ENCODE measurements at regions of chr4 and their contacts with region 1.

Region 1: GRCh38 chr4:15805583-15806517 is 27.7 kb downstream of the CD38 start:
- DNase-seq: peak; percentile 42 to 62 (median 50)
- ATAC-seq: peak; percentile 89
- H3K4me3 ChIP-seq: no peak overlapping the region
- H3K27ac ChIP-seq: no peak overlapping the region
- H3K4me1 ChIP-seq: no peaks in the 10 kb centered on the region
- H3K27me3 ChIP-seq: no peaks in the 10 kb centered on the region; a peak in 1 of 5 replicates
- CTCF ChIP-seq: peak; percentile 63 to 85 (median 74); a peak in 5 of 6 replicates
- EP300 ChIP-seq: no peak
- POLR2A ChIP-seq: no peak
- RAD21 ChIP-seq: peak; percentile 79 to 83

Region 2: GRCh38 chr4:15729910-15730533 is 75.8 kb before region 1 on chr4:
- CTCF ChIA-PET with region 1: no interaction called
- POLR2A ChIA-PET with region 1: no interaction called
- in situ Hi-C with region 1: no loop called
- intact Hi-C with region 1: loop called (anchors 2 kb)
- DNase-seq: peak; percentile 52 to 59 (median 56)
- ATAC-seq: peak; percentile 82
- H3K4me3 ChIP-seq: no peak overlapping the region
- H3K27ac ChIP-seq: no peak overlapping the region
- H3K4me1 ChIP-seq: no peaks in the 10 kb centered on the region
- H3K27me3 ChIP-seq: peaks cover 9 to 11% of the 10 kb centered on the region in 2 experiments; a peak in 4 of 5 replicates
- CTCF ChIP-seq: peak; percentile 53 to 80 (median 65)
- EP300 ChIP-seq: no peak
- POLR2A ChIP-seq: no peak
- RAD21 ChIP-seq: peak; percentile 51 to 65

Region 3: GRCh38 chr4:15868111-15868510 is 62.3 kb after region 1 on chr4:
- CTCF ChIA-PET with region 1: no interaction called
- POLR2A ChIA-PET with region 1: no interaction called
- in situ Hi-C with region 1: no loop called
- intact Hi-C with region 1: no loop called
- DNase-seq: peak in 1 of 4 experiments; percentile 18
- ATAC-seq: peak; percentile 80
- H3K4me3 ChIP-seq: no peak overlapping the region
- H3K27ac ChIP-seq: no peak overlapping the region
- H3K4me1 ChIP-seq: no peaks in the 10 kb centered on the region
- H3K27me3 ChIP-seq: no peaks in the 10 kb centered on the region
- CTCF ChIP-seq: peak in 2 of 3 experiments; percentile 10 to 30; a peak in 2 of 6 replicates
- EP300 ChIP-seq: no peak
- POLR2A ChIP-seq: no peak
- RAD21 ChIP-seq: no peak

Region 4: DNA sequence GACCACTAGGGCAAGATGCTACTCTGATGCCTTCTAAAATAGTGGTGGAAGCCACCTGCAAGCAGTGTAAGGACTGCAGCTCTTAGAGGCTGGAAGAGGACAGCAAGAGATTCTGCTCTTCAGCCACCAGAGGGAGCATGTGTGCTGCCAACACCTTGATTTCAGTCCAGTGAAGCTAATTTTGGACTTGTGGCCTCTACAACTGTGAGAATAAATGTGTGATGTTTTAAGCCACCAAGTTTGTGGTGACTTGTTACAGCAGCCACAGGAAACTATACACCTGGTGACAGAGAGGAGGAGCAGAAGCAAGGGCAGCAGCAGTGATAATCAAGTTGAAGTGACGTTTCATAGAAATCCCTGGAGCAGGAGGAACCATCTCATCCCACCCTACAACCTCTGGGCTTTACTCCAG is 76.8 kb after region 1 on chr4:
- CTCF ChIA-PET with region 1: interaction called, 4 read pairs
- POLR2A ChIA-PET with region 1: no interaction called
- in situ Hi-C with region 1: no loop called
- intact Hi-C with region 1: loop called (anchors 2 kb)
- DNase-seq: peak; percentile 44 to 70 (median 50)
- ATAC-seq: peak; percentile 96
- H3K4me3 ChIP-seq: no peak overlapping the region
- H3K27ac ChIP-seq: no peak overlapping the region
- H3K4me1 ChIP-seq: no peaks in the 10 kb centered on the region
- H3K27me3 ChIP-seq: no peaks in the 10 kb centered on the region; a peak in 1 of 5 replicates
- CTCF ChIP-seq: peak; percentile 76 to 78 (median 78)
- EP300 ChIP-seq: no peak
- POLR2A ChIP-seq: no peak
- RAD21 ChIP-seq: peak; percentile 49 to 67

Region 5: DNA sequence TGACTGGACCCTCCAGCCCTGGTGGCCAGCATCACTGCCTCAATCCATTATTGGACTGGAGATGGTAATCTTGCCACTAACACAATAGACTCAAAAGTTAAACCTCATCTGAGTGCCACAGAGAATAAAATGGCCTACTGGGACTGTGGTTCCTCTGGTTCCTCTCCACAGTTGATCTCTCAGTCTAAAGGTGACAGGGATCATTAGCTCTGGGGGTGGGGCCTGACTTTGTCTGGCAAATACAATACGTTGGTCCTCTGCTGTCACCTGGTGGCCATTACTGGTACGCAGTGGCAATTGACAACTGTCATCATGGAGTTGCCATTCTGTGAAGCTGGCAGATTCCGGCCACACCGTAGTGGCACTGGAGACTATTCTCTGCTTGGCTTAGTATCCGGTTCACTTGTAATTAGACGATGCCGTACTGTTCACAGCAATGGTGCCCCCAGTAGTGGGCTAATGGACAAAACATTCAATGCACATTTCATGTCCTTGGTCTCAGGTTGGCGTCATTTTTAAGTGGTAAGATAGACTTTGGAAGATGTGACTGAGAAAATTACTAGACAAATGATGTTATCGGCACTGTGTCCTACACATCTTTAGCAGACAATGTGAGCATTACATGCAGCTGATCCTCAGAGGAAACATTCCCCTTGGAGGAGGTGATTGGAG is 150.5 kb after region 1 on chr4:
- CTCF ChIA-PET with region 1: interaction called, 28 read pairs
- POLR2A ChIA-PET with region 1: no interaction called
- in situ Hi-C with region 1: loop called (anchors 5 kb)
- intact Hi-C with region 1: loop called (anchors 1 kb)
- DNase-seq: peak; percentile 73 to 77 (median 74)
- ATAC-seq: peak; percentile 97
- H3K4me3 ChIP-seq: no peak overlapping the region
- H3K27ac ChIP-seq: no peak overlapping the region
- H3K4me1 ChIP-seq: no peaks in the 10 kb centered on the region
- H3K27me3 ChIP-seq: no peaks in the 10 kb centered on the region; a peak in 1 of 5 replicates
- CTCF ChIP-seq: peak; percentile 80 to 90 (median 87)
- EP300 ChIP-seq: no peak
- POLR2A ChIP-seq: no peak
- RAD21 ChIP-seq: peak; percentile 77 to 84

Region 6: GRCh38 chr4:16001484-16001858 is 195.6 kb after region 1 on chr4:
- CTCF ChIA-PET with region 1: interaction called, 7 read pairs
- POLR2A ChIA-PET with region 1: no interaction called
- in situ Hi-C with region 1: loop called (anchors 10 kb)
- intact Hi-C with region 1: loop called (anchors 1 kb)
- DNase-seq: peak; percentile 62 to 68 (median 64)
- ATAC-seq: peak; percentile 99
- H3K4me3 ChIP-seq: no peak overlapping the region
- H3K27ac ChIP-seq: no peak overlapping the region
- H3K4me1 ChIP-seq: no peaks in the 10 kb centered on the region
- H3K27me3 ChIP-seq: peaks cover 0 to 14% of the 10 kb centered on the region in 2 experiments; a peak in 4 of 5 replicates
- CTCF ChIP-seq: peak; percentile 67 to 82 (median 81)
- EP300 ChIP-seq: no peak
- POLR2A ChIP-seq: no peak
- RAD21 ChIP-seq: peak; percentile 74 to 79

Region 7: GRCh38 chr4:16264798-16265197 is 458.9 kb after region 1 on chr4:
- CTCF ChIA-PET with region 1: interaction called, 9 read pairs
- POLR2A ChIA-PET with region 1: no interaction called
- in situ Hi-C with region 1: loop called (anchors 25 kb)
- intact Hi-C with region 1: loop called (anchors 1 kb)
- DNase-seq: peak in 2 of 4 experiments; percentile 30 to 34
- ATAC-seq: peak; percentile 79
- H3K4me3 ChIP-seq: no peak overlapping the region
- H3K27ac ChIP-seq: no peak overlapping the region
- H3K4me1 ChIP-seq: no peaks in the 10 kb centered on the region
- H3K27me3 ChIP-seq: no peaks in the 10 kb centered on the region
- CTCF ChIP-seq: peak; percentile 33 to 69 (median 40); a peak in 3 of 6 replicates
- EP300 ChIP-seq: no peak
- POLR2A ChIP-seq: no peak
- RAD21 ChIP-seq: peak; percentile 77 to 79

Measured in K562 (cell line).